Activated CD4-positive, alpha-beta memory T cell treated with anti-CD3 and anti-CD28 coated beads for 36 hours (primary cell): ENCODE measurements at regions of chr2 and their contacts with region 1.

Region 1: DNA sequence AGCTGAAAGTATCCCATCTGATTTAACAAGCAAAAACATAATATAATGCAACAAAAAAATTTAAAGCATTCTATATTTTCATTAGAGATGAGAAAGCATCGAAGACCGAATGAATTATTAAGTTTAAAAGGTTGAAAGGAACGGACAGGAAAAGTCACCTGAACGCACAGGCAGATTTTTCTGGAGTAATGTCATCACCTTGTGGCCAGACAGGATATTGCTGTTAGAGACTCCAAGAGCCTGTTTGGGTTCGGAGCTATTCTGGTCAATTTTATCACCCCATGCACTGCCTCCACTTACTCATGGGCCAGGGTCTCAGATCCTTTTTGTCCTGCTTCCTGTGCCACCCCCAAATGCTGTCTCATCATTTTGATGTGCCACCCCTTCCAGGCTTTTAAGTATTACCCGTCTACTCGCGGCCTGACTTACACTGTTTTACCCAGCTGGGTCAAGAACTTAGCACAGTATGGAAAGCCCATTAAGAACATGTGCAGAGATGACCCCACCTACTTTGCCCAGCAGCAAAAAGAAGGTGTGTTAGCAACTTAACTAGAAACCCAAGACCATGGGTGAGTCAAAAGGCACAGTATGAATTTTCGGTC is 27.3 kb downstream of the GKN2 start:
- DNase-seq: peak; percentile 57
- H3K4me3 Mint-ChIP-seq: no peak overlapping the region
- H3K27ac Mint-ChIP-seq: no peak overlapping the region
- H3K4me1 Mint-ChIP-seq: peaks cover 6% of the 10 kb centered on the region
- H3K27me3 Mint-ChIP-seq: no peaks in the 10 kb centered on the region

Region 2: DNA sequence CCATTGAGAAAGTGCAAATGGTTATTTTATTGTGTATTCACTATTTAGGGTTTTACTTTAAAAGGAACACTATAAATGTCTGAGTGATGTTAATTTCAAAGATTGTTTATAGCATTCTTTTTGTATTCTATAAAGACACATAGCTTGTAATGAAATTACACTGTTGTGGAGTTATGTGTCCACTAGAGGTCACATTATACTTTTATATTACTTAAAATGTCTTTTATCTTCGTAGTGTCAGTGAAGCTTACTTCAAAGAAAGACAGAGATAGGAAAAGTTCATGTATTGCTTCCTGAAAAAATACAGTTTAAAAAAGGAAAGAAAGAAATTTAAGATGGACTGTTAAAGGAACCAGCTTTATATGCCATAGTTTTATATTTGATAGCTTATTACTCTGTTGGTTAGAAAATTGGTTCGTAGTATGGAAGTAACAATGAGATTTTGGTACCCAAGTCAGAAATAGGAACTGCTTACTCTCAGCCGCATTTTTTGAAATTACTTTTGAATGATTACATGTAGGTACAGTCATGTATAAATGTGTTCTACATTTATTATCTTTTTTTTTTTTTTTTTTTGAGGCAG is 437.5 kb before region 1 on chr2:
- CTCF ChIA-PET with region 1: interaction called, 37 read pairs
- POLR2A ChIA-PET with region 1: no interaction called
- intact Hi-C with region 1: loop called (anchors 5 kb)
- DNase-seq: no peak
- H3K4me3 Mint-ChIP-seq: no peak overlapping the region
- H3K27ac Mint-ChIP-seq: no peak overlapping the region
- H3K4me1 Mint-ChIP-seq: peaks cover 2% of the 10 kb centered on the region
- H3K27me3 Mint-ChIP-seq: no peaks in the 10 kb centered on the region

Region 3: GRCh38 chr2:68742626-68743415 is 182.6 kb before region 1 on chr2:
- CTCF ChIA-PET with region 1: interaction called, 12 read pairs
- POLR2A ChIA-PET with region 1: no interaction called
- intact Hi-C with region 1: no loop called
- DNase-seq: no peak
- H3K4me3 Mint-ChIP-seq: peak overlapping the region; percentile 40
- H3K27ac Mint-ChIP-seq: peak overlapping the region; percentile 75
- H3K4me1 Mint-ChIP-seq: peaks cover 90% of the 10 kb centered on the region
- H3K27me3 Mint-ChIP-seq: no peaks in the 10 kb centered on the region

Region 4: GRCh38 chr2:68837164-68837860 is 88.1 kb before region 1 on chr2:
- CTCF ChIA-PET with region 1: interaction called, 29 read pairs
- POLR2A ChIA-PET with region 1: no interaction called
- intact Hi-C with region 1: loop called (anchors 1 kb)
- DNase-seq: peak; percentile 77
- H3K4me3 Mint-ChIP-seq: no peak overlapping the region
- H3K27ac Mint-ChIP-seq: peak overlapping the region; percentile 63
- H3K4me1 Mint-ChIP-seq: peaks cover 47% of the 10 kb centered on the region
- H3K27me3 Mint-ChIP-seq: no peaks in the 10 kb centered on the region

Region 5: DNA sequence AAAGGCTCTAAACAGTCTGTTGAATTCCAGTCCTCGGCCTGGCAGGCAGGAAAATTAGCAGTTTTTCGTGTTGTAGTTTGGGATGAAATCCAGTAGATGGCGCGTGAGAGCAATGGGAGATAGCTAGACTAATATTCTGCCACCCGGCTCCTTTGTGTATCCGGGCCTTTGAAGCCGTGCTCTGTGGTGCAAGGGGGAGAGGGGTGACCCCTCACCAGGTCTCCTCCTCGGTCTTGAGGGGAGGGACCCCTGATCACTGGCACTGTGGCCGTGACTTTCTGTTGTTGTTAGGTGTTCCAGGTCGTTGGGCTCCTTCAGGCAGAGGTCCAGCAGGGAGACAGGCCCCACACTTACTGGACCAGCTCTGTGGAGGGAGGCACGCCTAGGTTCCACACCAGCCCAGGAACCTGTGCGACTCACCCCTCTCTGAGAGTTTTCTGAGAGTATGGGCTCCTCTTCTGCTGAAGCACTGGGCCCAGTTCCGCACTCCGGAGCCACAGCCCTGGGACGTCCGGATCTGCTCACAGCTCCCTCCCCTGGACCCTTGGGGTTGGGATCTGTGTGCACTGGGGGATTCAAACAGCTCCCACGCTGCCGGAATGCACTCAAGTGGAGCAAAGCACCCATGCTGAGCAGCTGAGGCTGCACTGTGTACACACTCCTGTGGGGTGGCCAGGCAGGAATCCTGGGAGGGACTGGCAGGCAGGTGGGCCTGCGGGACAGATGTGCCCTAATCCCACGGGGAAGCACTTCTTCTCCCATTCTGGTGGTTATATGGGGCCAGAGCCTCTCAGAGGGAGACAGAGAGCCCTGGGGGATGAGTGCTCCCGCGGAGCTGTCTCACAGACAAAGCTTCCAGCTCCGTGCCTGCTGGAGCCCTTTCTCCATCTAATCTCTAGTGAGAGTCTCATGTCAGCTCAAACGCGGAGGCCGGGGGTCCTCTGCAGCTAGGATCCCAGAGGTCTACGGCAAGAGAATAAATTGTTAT is 18.5 kb after region 1 on chr2:
- CTCF ChIA-PET with region 1: interaction called, 24 read pairs
- POLR2A ChIA-PET with region 1: no interaction called
- intact Hi-C with region 1: no loop called
- DNase-seq: peak; percentile 58
- H3K4me3 Mint-ChIP-seq: no peak overlapping the region
- H3K27ac Mint-ChIP-seq: no peak overlapping the region
- H3K4me1 Mint-ChIP-seq: peaks cover 8% of the 10 kb centered on the region
- H3K27me3 Mint-ChIP-seq: peaks cover 32% of the 10 kb centered on the region

Region 6: GRCh38 chr2:68980956-68981355 is 55.6 kb after region 1 on chr2:
- CTCF ChIA-PET with region 1: no interaction called
- POLR2A ChIA-PET with region 1: no interaction called
- intact Hi-C with region 1: no loop called
- DNase-seq: no peak
- H3K4me3 Mint-ChIP-seq: no peak overlapping the region
- H3K27ac Mint-ChIP-seq: no peak overlapping the region
- H3K4me1 Mint-ChIP-seq: no peaks in the 10 kb centered on the region
- H3K27me3 Mint-ChIP-seq: peaks cover 12% of the 10 kb centered on the region